ENCODE measurements at regions of chr12 and their contacts with region 1.

Region 1: GRCh38 chr12:54201001-54201794 is 12.4 kb upstream of the SMUG1 start:
- DNase-seq: peak; percentile 87
- ATAC-seq: peak; percentile 92
- H3K4me3 Mint-ChIP-seq: no peak overlapping the region
- H3K27ac Mint-ChIP-seq: no peak overlapping the region
- H3K4me1 Mint-ChIP-seq: peaks cover 16% of the 10 kb centered on the region
- H3K27me3 Mint-ChIP-seq: peaks cover 96% of the 10 kb centered on the region
- CTCF ChIP-seq: peak; percentile 93

Region 2: DNA sequence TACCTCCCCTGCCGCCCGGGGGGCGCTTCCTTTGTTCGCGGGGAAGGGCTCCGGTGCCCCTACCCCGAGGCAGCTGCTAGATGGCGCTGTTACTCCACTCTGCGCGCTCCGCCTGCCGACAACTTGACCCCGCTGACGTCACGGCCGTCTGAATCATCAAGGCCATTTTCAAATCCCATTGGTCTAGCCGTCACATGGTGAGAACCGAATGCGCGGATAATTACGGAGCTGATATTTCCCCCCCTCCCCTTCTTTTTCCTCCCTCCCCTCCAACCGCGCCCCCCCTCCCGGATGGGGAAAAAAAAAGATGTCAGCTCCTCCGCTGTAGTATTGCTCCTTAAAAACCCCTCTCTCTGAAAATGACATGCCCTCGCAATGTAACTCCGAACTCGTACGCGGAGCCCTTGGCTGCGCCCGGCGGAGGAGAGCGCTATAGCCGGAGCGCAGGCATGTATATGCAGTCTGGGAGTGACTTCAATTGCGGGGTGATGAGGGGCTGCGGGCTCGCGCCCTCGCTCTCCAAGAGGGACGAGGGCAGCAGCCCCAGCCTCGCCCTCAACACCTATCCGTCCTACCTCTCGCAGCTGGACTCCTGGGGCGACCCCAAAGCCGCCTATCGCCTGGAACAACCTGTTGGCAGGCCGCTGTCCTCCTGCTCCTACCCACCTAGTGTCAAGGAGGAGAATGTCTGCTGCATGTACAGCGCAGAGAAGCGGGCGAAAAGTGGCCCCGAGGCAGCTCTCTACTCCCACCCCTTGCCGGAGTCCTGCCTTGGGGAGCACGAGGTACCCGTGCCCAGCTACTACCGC is 216.1 kb before region 1 on chr12 and contains the start of gene HOXC10:
- CTCF ChIA-PET with region 1: interaction called, 36 read pairs
- POLR2A ChIA-PET with region 1: no interaction called
- DNase-seq: peak; percentile 95
- ATAC-seq: peak; percentile 56
- H3K4me3 Mint-ChIP-seq: peak within 1 kb of the TSS; percentile 52
- H3K27ac Mint-ChIP-seq: no peak within 1 kb of the TSS
- H3K4me1 Mint-ChIP-seq: peaks cover 34% of the 10 kb centered on the region
- H3K27me3 Mint-ChIP-seq: peaks cover 100% of the 10 kb centered on the region
- CTCF ChIP-seq: peak; percentile 76
- total RNA-seq, gene HOXC10: 0.09 TPM in 1 of 3 replicates, not detected in the others

Region 3: GRCh38 chr12:54017878-54018467 is 183.2 kb before region 1 on chr12:
- CTCF ChIA-PET with region 1: interaction called, 25 read pairs
- POLR2A ChIA-PET with region 1: interaction called, 3 read pairs
- DNase-seq: peak; percentile 83
- ATAC-seq: peak; percentile 57
- H3K4me3 Mint-ChIP-seq: peak overlapping the region; percentile 63
- H3K27ac Mint-ChIP-seq: no peak overlapping the region
- H3K4me1 Mint-ChIP-seq: peaks cover 26% of the 10 kb centered on the region
- H3K27me3 Mint-ChIP-seq: peaks cover 99% of the 10 kb centered on the region
- CTCF ChIP-seq: no peak

Region 4: DNA sequence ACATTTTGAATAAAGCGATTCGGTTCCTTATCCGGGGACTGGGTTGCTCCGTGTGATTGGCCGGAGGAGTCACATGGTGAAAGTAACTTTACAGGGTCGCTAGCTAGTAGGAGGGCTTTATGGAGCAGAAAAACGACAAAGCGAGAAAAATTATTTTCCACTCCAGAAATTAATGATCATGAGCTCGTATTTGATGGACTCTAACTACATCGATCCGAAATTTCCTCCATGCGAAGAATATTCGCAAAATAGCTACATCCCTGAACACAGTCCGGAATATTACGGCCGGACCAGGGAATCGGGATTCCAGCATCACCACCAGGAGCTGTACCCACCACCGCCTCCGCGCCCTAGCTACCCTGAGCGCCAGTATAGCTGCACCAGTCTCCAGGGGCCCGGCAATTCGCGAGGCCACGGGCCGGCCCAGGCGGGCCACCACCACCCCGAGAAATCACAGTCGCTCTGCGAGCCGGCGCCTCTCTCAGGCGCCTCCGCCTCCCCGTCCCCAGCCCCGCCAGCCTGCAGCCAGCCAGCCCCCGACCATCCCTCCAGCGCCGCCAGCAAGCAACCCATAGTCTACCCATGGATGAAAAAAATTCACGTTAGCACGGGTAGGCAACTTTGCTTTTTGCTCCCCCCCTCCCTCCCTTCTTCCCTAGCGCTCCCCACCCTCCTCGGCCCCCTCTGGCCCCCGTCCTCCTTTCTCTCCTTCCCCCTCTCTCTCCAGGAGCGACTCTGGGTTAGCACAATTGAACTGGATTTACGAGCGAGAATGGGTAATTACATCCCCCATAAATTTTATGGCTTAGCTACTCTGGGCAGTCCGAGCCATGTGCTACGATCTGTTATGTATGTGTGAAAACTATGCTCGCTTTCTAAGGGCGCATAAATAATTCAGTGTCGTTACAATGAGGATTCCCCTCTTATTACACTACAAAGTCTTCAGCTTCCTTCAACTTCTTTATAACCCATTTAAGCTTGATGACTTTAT is 147.2 kb before region 1 on chr12 and contains the start of gene HOXC4:
- CTCF ChIA-PET with region 1: interaction called, 24 read pairs
- POLR2A ChIA-PET with region 1: no interaction called
- DNase-seq: peak; percentile 38
- ATAC-seq: peak; percentile 29
- H3K4me3 Mint-ChIP-seq: peak within 1 kb of the TSS; percentile 64
- H3K27ac Mint-ChIP-seq: no peak within 1 kb of the TSS
- H3K4me1 Mint-ChIP-seq: peaks cover 63% of the 10 kb centered on the region
- H3K27me3 Mint-ChIP-seq: peaks cover 100% of the 10 kb centered on the region
- CTCF ChIP-seq: no peak
- total RNA-seq, gene HOXC4: 0.14 to 0.46 TPM (median 0.30 TPM) in 3 replicates

Region 5: GRCh38 chr12:54148560-54149429 is 52.4 kb before region 1 on chr12:
- CTCF ChIA-PET with region 1: interaction called, 10 read pairs
- POLR2A ChIA-PET with region 1: no interaction called
- DNase-seq: no peak
- ATAC-seq: peak; percentile 27; the same call in 1 of the 2 replicates
- H3K4me3 Mint-ChIP-seq: no peak overlapping the region
- H3K27ac Mint-ChIP-seq: no peak overlapping the region
- H3K4me1 Mint-ChIP-seq: peaks cover 14% of the 10 kb centered on the region
- H3K27me3 Mint-ChIP-seq: peaks cover 37% of the 10 kb centered on the region
- CTCF ChIP-seq: no peak

Region 6: GRCh38 chr12:54173066-54173726 is 28.0 kb before region 1 on chr12:
- CTCF ChIA-PET with region 1: interaction called, 25 read pairs
- POLR2A ChIA-PET with region 1: no interaction called
- DNase-seq: peak; percentile 48
- ATAC-seq: peak; percentile 62
- H3K4me3 Mint-ChIP-seq: no peak overlapping the region
- H3K27ac Mint-ChIP-seq: no peak overlapping the region
- H3K4me1 Mint-ChIP-seq: peaks cover 3% of the 10 kb centered on the region; the same call in 1 of the 2 replicates
- H3K27me3 Mint-ChIP-seq: peaks cover 13% of the 10 kb centered on the region
- CTCF ChIP-seq: no peak